Stomach (tissue), 19 donors: ENCODE measurements at regions of chr2 and their contacts with region 1.

Region 1: DNA sequence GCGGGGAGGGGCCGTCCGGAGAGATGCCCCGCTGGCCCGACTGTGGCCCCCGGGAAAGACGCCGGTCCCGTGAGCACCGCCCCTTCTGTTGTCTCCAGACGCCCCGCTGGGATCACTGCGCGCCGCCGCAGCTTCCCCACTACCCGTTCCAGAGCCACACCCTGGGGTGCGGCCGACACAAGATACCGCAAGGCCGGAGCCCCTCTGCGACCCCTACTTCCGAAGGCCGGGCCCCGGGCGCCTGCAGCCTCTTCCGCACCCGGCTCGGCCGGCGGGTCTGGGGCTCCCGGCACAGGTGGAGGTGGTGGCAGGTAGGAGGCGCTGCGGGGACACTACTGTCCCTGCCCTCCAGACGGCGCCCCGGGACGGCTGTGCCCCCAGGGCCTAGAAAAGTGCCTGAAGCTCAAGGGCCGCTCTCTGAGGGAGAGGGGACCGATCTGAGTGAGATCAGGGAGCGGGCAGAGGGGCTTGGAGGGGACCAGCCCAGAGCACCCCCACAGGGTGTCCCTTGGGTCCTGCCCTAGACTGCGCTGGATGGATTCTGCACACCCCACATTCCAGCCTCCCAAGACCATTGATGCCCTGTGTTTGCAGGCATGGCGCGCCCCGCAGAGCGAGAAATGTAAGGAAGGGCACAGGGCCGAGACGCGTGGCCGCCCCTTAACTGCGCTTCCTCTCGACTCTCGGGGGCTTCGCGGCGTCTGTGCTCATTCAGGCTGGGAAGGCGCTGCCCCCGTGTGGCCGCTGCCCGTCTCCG is 80.0 kb downstream of the GFPT1 start:
- DNase-seq: peak; percentile 73 to 95
- H3K4me3 ChIP-seq: peak overlapping the region; percentile 51 to 61 (median 57)
- H3K27ac ChIP-seq: peak overlapping the region; percentile 4 to 74 (median 73)
- H3K4me1 ChIP-seq: peaks cover 29 to 59% (median 50%) of the 10 kb centered on the region in 4 donors
- H3K27me3 ChIP-seq: peaks cover 0 to 25% (median 6%) of the 10 kb centered on the region in 3 donors
- CTCF ChIP-seq: peak in 5 of 7 experiments; percentile 29 to 80 (median 71)
- EP300 ChIP-seq: no peak
- POLR2A ChIP-seq: no peak

Region 2: GRCh38 chr2:69026026-69026425 is 281.0 kb before region 1 on chr2:
- intact Hi-C with region 1: loop called (anchors 5 kb)
- DNase-seq: peak; percentile 46 to 66
- H3K4me3 ChIP-seq: no peak overlapping the region
- H3K27ac ChIP-seq: no peak overlapping the region
- H3K4me1 ChIP-seq: peaks cover 0 to 27% (median 12%) of the 10 kb centered on the region in 4 donors
- H3K27me3 ChIP-seq: no peaks in the 10 kb centered on the region
- CTCF ChIP-seq: peak in 5 of 7 experiments; percentile 34 to 83 (median 53)
- EP300 ChIP-seq: no peak
- POLR2A ChIP-seq: no peak

Region 3: DNA sequence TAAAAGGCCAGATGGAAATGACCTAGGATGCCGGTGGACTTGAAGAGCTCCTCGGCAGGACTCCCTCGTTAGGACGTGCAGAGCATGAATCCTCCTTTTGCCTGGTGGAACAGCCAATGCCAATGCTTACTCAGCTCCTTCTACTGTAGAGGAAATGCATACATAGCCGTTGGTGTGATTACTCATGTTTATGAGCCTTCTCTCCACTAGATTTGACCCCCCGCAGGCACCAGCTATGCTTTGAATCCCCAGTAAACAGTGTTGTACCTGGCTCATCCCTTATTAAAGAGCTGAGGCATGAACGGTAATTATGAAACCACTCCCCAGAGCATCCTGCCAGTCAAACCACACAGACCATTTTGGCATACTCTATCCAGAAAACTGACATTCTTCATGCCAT is 121.2 kb before region 1 on chr2:
- intact Hi-C with region 1: no loop called
- DNase-seq: no peak
- H3K4me3 ChIP-seq: no peak overlapping the region
- H3K27ac ChIP-seq: no peak overlapping the region
- H3K4me1 ChIP-seq: peaks cover 0 to 4% (median 0%) of the 10 kb centered on the region in 4 donors
- H3K27me3 ChIP-seq: no peaks in the 10 kb centered on the region
- CTCF ChIP-seq: no peak
- EP300 ChIP-seq: no peak
- POLR2A ChIP-seq: no peak

Region 4: DNA sequence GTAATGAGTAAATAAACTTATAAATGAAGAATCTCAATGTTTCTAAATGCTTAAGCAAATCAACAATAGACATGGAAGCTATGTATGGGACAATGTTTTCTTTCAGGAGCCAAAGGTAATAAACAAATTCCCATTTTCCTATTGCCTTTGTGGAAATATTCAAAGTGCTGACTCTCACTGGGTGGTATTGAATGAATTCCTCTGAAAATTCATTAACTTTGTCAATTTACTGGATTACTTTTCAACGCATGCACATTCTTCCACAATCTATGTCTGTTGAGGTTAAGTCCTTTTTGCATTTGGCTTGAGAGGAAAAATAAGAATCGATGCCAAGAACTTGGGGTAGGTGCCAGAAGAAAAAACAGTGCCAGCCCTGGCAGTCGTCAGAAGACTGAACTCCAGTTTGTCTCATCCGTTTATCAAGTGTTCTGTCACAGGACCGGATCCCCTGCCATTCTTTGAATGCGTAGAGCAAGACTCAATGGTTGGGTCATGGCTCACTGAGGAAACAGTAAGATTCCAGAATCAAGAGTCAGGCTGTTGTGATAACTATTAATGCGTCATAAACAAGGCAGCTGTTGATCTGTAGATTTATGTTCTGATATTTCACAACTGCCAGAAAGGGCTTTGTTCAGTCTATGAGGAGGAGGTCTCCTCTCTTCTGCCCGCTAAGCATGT is 53.2 kb before region 1 on chr2:
- intact Hi-C with region 1: no loop called
- DNase-seq: peak in 1 of 2 donors; percentile 57
- H3K4me3 ChIP-seq: no peak overlapping the region
- H3K27ac ChIP-seq: peak overlapping the region in 3 of 5 donors; percentile 14 to 55 (median 48)
- H3K4me1 ChIP-seq: peaks cover 0 to 17% (median 0%) of the 10 kb centered on the region in 4 donors
- H3K27me3 ChIP-seq: no peaks in the 10 kb centered on the region
- CTCF ChIP-seq: no peak
- EP300 ChIP-seq: no peak
- POLR2A ChIP-seq: no peak